ENCODE measurements at regions of chr11 and their contacts with region 1.

Region 1: DNA sequence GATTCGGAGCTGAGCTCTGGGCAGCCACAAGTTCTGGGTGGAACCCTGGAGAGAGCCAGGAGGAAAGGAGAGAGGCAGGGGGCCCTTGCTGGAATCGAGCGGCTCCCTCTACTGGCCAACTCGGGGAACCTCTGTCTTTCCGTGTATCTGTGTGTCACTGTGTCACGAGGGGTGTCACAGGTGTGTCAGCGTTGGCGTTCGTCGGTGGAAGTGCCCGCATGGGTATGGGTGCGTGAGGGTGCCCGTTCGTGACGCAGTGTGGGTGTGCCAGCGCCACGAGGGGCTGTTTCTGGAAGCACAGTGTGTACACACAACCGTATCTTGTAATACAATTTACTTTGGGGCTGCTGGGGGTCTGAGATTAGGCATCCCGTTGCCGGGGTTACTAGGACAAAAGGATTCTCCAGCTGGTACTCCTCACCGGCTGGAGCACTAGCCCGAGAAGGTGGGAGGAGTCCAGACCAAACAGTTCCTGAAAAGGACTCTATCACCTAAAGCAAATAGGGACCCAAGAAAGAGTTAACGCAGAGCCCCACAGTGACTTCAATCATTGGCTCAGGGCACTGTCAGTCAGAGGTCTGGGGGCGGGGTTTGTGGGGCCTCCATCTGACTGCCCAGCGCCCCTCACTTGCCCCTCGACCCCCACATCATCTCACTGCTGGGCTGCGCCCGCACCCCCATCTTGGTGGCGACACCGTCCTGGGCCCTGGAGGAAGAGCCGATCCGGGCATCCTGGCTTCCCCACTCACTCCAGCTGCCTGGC is 2.6 kb upstream of the BCL9L start:
- DNase-seq: peak; percentile 89 to 99 (median 97)
- ATAC-seq: peak; percentile 79
- H3K4me3 ChIP-seq: peak overlapping the region; percentile 81
- H3K4me3 Mint-ChIP-seq: peak overlapping the region; percentile 86 to 98 (median 95)
- H3K27ac ChIP-seq: peak overlapping the region; percentile 96
- H3K27ac Mint-ChIP-seq: peak overlapping the region; percentile 93 to 100 (median 99)
- H3K4me1 ChIP-seq: peaks cover 25 to 34% of the 10 kb centered on the region in 2 donors
- H3K4me1 Mint-ChIP-seq: peaks cover 30 to 56% (median 46%) of the 10 kb centered on the region in 7 donors
- H3K27me3 ChIP-seq: no peaks in the 10 kb centered on the region
- H3K27me3 Mint-ChIP-seq: peaks cover 0 to 2% (median 0%) of the 10 kb centered on the region in 5 donors

Region 2: DNA sequence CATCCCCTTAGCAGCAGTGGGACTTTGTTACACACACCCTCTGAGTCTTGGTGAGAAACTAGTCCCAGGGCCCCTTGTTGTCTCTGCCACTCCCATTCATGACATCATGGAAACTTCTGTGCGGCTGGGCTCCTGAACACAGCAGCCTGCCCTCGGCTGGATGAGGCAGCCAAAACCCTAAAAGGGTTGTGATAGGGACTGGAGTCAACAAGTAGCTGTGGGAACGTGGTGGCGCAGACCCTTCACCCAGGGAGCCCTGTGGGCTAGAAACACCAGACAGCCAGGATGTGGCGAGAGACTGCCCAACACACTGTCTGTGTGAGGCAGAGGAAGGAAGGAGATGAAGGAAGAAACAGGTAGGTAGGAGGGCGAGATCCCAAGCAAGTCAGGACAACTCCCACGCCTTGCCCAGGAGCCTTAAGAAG is 589.6 kb before region 1 on chr11:
- CTCF ChIA-PET with region 1: no interaction called
- POLR2A ChIA-PET with region 1: no interaction called
- intact Hi-C with region 1: loop called in 1 of 2 experiments (anchors 5 kb)
- DNase-seq: peak; percentile 46 to 99 (median 92)
- ATAC-seq: peak; percentile 82
- H3K4me3 ChIP-seq: peak overlapping the region; percentile 88
- H3K4me3 Mint-ChIP-seq: peak overlapping the region; percentile 89 to 98 (median 96)
- H3K27ac ChIP-seq: peak overlapping the region; percentile 96
- H3K27ac Mint-ChIP-seq: peak overlapping the region; percentile 95 to 100 (median 99)
- H3K4me1 ChIP-seq: peaks cover 46 to 50% of the 10 kb centered on the region in 2 donors
- H3K4me1 Mint-ChIP-seq: peaks cover 28 to 68% (median 55%) of the 10 kb centered on the region in 7 donors
- H3K27me3 ChIP-seq: no peaks in the 10 kb centered on the region
- H3K27me3 Mint-ChIP-seq: no peaks in the 10 kb centered on the region

Region 3: GRCh38 chr11:118689851-118690552 is 238.3 kb before region 1 on chr11:
- CTCF ChIA-PET with region 1: interaction called, 3 read pairs
- POLR2A ChIA-PET with region 1: interaction called, 4 read pairs
- intact Hi-C with region 1: loop called in 1 of 2 experiments (anchors 1 kb)
- DNase-seq: peak; percentile 71 to 87 (median 82)
- ATAC-seq: peak; percentile 96
- H3K4me3 ChIP-seq: peak overlapping the region; percentile 73
- H3K4me3 Mint-ChIP-seq: peak overlapping the region; percentile 56 to 80 (median 74)
- H3K27ac ChIP-seq: peak overlapping the region; percentile 69
- H3K27ac Mint-ChIP-seq: peak overlapping the region in 8 of 9 donors; percentile 51 to 91 (median 72)
- H3K4me1 ChIP-seq: peaks cover 42 to 46% of the 10 kb centered on the region in 2 donors
- H3K4me1 Mint-ChIP-seq: peaks cover 34 to 58% (median 52%) of the 10 kb centered on the region in 7 donors
- H3K27me3 ChIP-seq: no peaks in the 10 kb centered on the region
- H3K27me3 Mint-ChIP-seq: peaks cover 0 to 23% (median 0%) of the 10 kb centered on the region in 5 donors

Region 4: GRCh38 chr11:118889781-118890180 is 38.5 kb before region 1 on chr11:
- CTCF ChIA-PET with region 1: interaction called, 10 read pairs
- POLR2A ChIA-PET with region 1: interaction called, 8 read pairs
- intact Hi-C with region 1: loop called in 1 of 2 experiments (anchors 1 kb)
- DNase-seq: no peak
- ATAC-seq: no peak
- H3K4me3 ChIP-seq: no peak overlapping the region
- H3K4me3 Mint-ChIP-seq: peak overlapping the region in 5 of 10 donors; percentile 8 to 82 (median 59)
- H3K27ac ChIP-seq: no peak overlapping the region
- H3K27ac Mint-ChIP-seq: peak overlapping the region in 6 of 9 donors; percentile 52 to 98 (median 96)
- H3K4me1 ChIP-seq: peaks cover 58 to 71% of the 10 kb centered on the region in 2 donors
- H3K4me1 Mint-ChIP-seq: peaks cover 53 to 92% (median 83%) of the 10 kb centered on the region in 7 donors
- H3K27me3 ChIP-seq: no peaks in the 10 kb centered on the region
- H3K27me3 Mint-ChIP-seq: no peaks in the 10 kb centered on the region

Region 5: GRCh38 chr11:118939953-118940598 is 11.8 kb after region 1 on chr11:
- CTCF ChIA-PET with region 1: interaction called, 16 read pairs
- POLR2A ChIA-PET with region 1: interaction called, 28 read pairs
- intact Hi-C with region 1: no loop called
- DNase-seq: peak in 6 of 9 donors; percentile 53 to 70 (median 58)
- ATAC-seq: peak; percentile 86
- H3K4me3 ChIP-seq: peak overlapping the region; percentile 38
- H3K4me3 Mint-ChIP-seq: peak overlapping the region in 9 of 10 donors; percentile 33 to 74 (median 66)
- H3K27ac ChIP-seq: peak overlapping the region; percentile 34
- H3K27ac Mint-ChIP-seq: peak overlapping the region in 8 of 9 donors; percentile 56 to 82 (median 76)
- H3K4me1 ChIP-seq: peaks cover 12 to 24% of the 10 kb centered on the region in 2 donors
- H3K4me1 Mint-ChIP-seq: peaks cover 31 to 60% (median 54%) of the 10 kb centered on the region in 7 donors
- H3K27me3 ChIP-seq: no peaks in the 10 kb centered on the region
- H3K27me3 Mint-ChIP-seq: peaks cover 0 to 4% (median 0%) of the 10 kb centered on the region in 5 donors

Region 6: GRCh38 chr11:119030329-119031049 is 102.2 kb after region 1 on chr11 and contains the start of gene SLC37A4:
- CTCF ChIA-PET with region 1: no interaction called
- POLR2A ChIA-PET with region 1: interaction called, 5 read pairs
- intact Hi-C with region 1: loop called in 1 of 2 experiments (anchors 1 kb)
- DNase-seq: peak; percentile 96 to 100 (median 98)
- ATAC-seq: peak; percentile 97
- H3K4me3 ChIP-seq: peak within 1 kb of the TSS; percentile 91
- H3K4me3 Mint-ChIP-seq: peak within 1 kb of the TSS; percentile 62 to 93 (median 82)
- H3K27ac ChIP-seq: peak within 1 kb of the TSS; percentile 79
- H3K27ac Mint-ChIP-seq: peak within 1 kb of the TSS; percentile 59 to 93 (median 81)
- H3K4me1 ChIP-seq: peaks cover 0 to 10% of the 10 kb centered on the region in 2 donors
- H3K4me1 Mint-ChIP-seq: peaks cover 12 to 24% (median 17%) of the 10 kb centered on the region in 7 donors
- H3K27me3 ChIP-seq: no peaks in the 10 kb centered on the region
- H3K27me3 Mint-ChIP-seq: no peaks in the 10 kb centered on the region
- total RNA-seq, gene SLC37A4: 7.1 to 20.8 (median 14.6) TPM

Measured in naive thymus-derived CD4-positive, alpha-beta T cell (primary cell).